PC-3 (cell line): ENCODE measurements at regions of chr3 and their contacts with region 1.

Region 1: GRCh38 chr3:52144034-52144795 is 10.0 kb downstream of the POC1A start:
- DNase-seq: peak; percentile 86
- ATAC-seq: peak; percentile 95
- H3K4me3 ChIP-seq: no peak overlapping the region
- H3K27ac ChIP-seq: no peak overlapping the region
- H3K4me1 ChIP-seq: peaks cover 2% of the 10 kb centered on the region; the same call in 1 of the 2 replicates
- H3K27me3 ChIP-seq: no peaks in the 10 kb centered on the region
- CTCF ChIP-seq: peak; percentile 93

Region 2: DNA sequence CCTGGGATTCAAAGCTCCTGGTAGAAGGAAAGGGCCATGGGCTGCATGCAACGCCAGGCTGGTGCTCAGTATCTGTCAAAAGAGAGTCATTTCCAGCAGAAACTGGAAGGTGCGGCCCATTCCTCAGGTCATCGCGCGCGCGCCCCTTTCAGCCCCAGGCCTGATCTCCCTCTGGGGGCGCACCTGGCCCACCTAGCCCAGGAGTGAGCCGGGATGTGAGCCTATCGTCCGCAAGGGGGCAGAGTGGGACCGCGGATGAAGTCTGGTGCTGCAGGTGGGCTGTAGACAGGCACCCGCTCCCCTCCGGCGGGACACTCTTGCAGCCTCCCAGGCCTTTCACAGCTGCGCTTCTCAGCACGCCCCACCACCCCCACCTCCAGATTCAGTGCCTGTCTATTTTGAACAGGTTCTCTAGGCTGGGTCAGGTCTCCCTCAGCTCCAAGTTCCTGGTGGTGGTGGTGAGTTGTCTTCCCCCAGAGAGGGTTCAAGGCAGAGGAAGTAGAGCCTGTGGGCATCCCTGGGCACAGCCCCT is 142.7 kb before region 1 on chr3:
- CTCF ChIA-PET with region 1: interaction called, 6 read pairs
- POLR2A ChIA-PET with region 1: no interaction called
- intact Hi-C with region 1: loop called (anchors 1 kb)
- DNase-seq: peak; percentile 85
- ATAC-seq: peak; percentile 82
- H3K4me3 ChIP-seq: peak overlapping the region; percentile 11; the same call in 1 of the 2 replicates
- H3K27ac ChIP-seq: no peak overlapping the region
- H3K4me1 ChIP-seq: peaks cover 10% of the 10 kb centered on the region
- H3K27me3 ChIP-seq: no peaks in the 10 kb centered on the region
- CTCF ChIP-seq: peak; percentile 99

Region 3: DNA sequence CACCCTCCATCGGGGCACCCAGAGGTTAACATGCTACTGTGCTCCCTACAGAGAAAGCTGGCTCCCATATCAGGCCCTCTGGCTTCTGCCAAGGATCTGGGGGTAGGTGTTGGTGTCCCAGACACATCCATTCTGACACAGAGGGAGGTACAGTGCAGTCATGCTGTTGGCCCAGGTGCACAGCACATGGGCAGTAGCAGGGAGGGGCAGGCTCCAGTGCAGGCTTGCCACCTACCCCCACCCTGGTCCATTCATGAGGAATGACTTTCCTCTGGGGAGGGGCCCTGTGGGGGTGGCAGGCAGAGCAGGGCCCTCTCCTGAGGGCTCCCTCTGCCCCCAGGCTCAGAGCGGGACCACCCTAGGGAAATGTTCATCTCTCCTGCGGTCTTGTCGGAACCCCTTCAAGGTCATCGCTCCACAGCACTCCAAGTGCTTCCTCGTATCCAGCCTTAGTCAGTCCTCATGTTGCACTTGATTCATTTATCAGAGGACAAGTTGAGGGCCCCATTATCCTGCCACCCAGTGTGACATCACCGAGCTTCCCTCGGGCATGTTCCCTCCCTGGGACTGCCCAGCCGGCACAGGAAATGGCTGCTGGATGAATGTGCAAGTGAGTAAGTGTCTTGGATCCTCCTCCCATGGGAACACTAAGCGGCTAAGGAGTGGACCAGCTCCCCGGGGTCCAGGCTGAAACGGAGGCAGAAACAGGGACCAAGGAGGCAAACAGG is 97.9 kb before region 1 on chr3:
- CTCF ChIA-PET with region 1: no interaction called
- POLR2A ChIA-PET with region 1: no interaction called
- intact Hi-C with region 1: loop called (anchors 2 kb)
- DNase-seq: peak; percentile 98
- ATAC-seq: peak; percentile 78
- H3K4me3 ChIP-seq: peak overlapping the region; percentile 41; the same call in 1 of the 2 replicates
- H3K27ac ChIP-seq: peak overlapping the region; percentile 99
- H3K4me1 ChIP-seq: peaks cover 37% of the 10 kb centered on the region
- H3K27me3 ChIP-seq: no peaks in the 10 kb centered on the region
- CTCF ChIP-seq: no peak

Region 4: GRCh38 chr3:52123106-52123725 is 21.0 kb before region 1 on chr3:
- CTCF ChIA-PET with region 1: no interaction called
- POLR2A ChIA-PET with region 1: no interaction called
- intact Hi-C with region 1: loop called (anchors 1 kb)
- DNase-seq: peak; percentile 77
- ATAC-seq: peak; percentile 77
- H3K4me3 ChIP-seq: no peak overlapping the region
- H3K27ac ChIP-seq: no peak overlapping the region
- H3K4me1 ChIP-seq: peaks cover 7% of the 10 kb centered on the region
- H3K27me3 ChIP-seq: no peaks in the 10 kb centered on the region
- CTCF ChIP-seq: peak; percentile 95

Region 5: DNA sequence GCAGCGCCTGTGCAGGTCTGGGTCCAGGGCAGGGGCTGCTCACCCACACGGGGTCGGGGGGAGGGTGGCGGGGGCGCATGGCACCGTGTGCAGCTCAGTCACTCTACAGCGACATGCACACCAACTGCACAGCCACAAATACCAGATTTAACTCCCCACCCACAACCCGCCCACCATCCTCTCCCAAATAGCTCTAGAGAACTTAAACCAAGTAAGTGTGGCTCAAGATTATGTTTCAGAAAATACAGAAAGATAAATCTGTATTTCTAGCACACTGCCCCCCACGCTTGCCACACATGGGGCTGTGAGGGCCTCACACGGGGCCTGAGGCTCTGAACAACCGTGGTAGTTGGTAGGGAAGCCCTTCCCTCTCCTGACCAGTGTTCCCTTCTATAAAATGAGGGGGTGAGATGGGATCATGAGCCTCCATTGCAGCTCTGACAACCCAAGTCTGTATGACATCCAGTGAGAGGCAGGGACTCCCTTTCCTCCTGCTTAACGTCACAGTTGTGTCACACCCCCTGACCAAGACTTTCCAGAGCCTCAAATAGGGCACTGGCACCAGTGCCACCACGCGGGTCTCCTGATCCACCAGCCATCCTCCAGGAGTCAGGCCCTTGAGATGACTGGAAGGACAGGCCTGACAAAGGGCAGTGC is 13.1 kb before region 1 on chr3:
- CTCF ChIA-PET with region 1: interaction called, 8 read pairs
- POLR2A ChIA-PET with region 1: interaction called, 10 read pairs
- intact Hi-C with region 1: loop called (anchors 1 kb)
- DNase-seq: no peak
- ATAC-seq: no peak
- H3K4me3 ChIP-seq: no peak overlapping the region
- H3K27ac ChIP-seq: no peak overlapping the region
- H3K4me1 ChIP-seq: peaks cover 14% of the 10 kb centered on the region
- H3K27me3 ChIP-seq: no peaks in the 10 kb centered on the region
- CTCF ChIP-seq: no peak